MCF 10A (cell line): ENCODE measurements at regions of chr18 and their contacts with region 1.

Region 1: GRCh38 chr18:59823596-59824195 is 76.1 kb upstream of the PMAIP1 start:
- DNase-seq: peak; percentile 83
- H3K4me3 Mint-ChIP-seq: no peak overlapping the region
- H3K27ac Mint-ChIP-seq: no peak overlapping the region
- H3K4me1 Mint-ChIP-seq: peaks cover 4% of the 10 kb centered on the region
- H3K27me3 Mint-ChIP-seq: no peaks in the 10 kb centered on the region
- CTCF ChIP-seq: peak; percentile 87

Region 2: DNA sequence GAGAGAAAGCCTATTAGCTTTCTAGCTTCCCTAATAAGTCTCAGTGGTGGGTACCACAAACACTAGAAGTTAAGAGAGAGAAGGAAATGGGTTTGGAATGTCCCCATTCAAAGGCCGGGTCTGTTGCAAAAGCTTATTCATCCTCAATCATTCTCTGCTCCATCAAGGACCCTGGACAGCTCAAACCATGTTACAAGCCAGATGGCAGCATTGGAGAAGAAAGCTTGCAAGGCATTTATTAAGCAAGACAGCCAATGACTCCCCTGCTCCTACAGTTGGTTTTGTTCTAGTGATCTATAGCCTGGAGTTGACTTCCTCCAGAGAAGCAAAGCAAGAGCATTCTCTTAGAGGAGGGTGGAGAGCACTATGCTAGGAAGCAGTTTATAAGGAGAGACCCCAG is 377.7 kb before region 1 on chr18:
- CTCF ChIA-PET with region 1: interaction called, 12 read pairs
- POLR2A ChIA-PET with region 1: no interaction called
- intact Hi-C with region 1: no loop called
- DNase-seq: peak; percentile 39
- H3K4me3 Mint-ChIP-seq: no peak overlapping the region
- H3K27ac Mint-ChIP-seq: no peak overlapping the region
- H3K4me1 Mint-ChIP-seq: no peaks in the 10 kb centered on the region
- H3K27me3 Mint-ChIP-seq: no peaks in the 10 kb centered on the region
- CTCF ChIP-seq: no peak

Region 3: GRCh38 chr18:59623456-59624368 is 200.0 kb before region 1 on chr18:
- CTCF ChIA-PET with region 1: interaction called, 51 read pairs
- POLR2A ChIA-PET with region 1: no interaction called
- intact Hi-C with region 1: no loop called
- DNase-seq: peak; percentile 86
- H3K4me3 Mint-ChIP-seq: peak overlapping the region; percentile 61
- H3K27ac Mint-ChIP-seq: peak overlapping the region; percentile 67
- H3K4me1 Mint-ChIP-seq: peaks cover 43% of the 10 kb centered on the region
- H3K27me3 Mint-ChIP-seq: peaks cover 4% of the 10 kb centered on the region
- CTCF ChIP-seq: no peak

Region 4: GRCh38 chr18:59685501-59685900 is 138.2 kb before region 1 on chr18:
- CTCF ChIA-PET with region 1: interaction called, 21 read pairs
- POLR2A ChIA-PET with region 1: no interaction called
- intact Hi-C with region 1: no loop called
- DNase-seq: no peak
- H3K4me3 Mint-ChIP-seq: no peak overlapping the region
- H3K27ac Mint-ChIP-seq: no peak overlapping the region
- H3K4me1 Mint-ChIP-seq: peaks cover 3% of the 10 kb centered on the region
- H3K27me3 Mint-ChIP-seq: no peaks in the 10 kb centered on the region
- CTCF ChIP-seq: no peak

Region 5: GRCh38 chr18:59705145-59705544 is 118.6 kb before region 1 on chr18:
- CTCF ChIA-PET with region 1: interaction called, 25 read pairs
- POLR2A ChIA-PET with region 1: interaction called, 5 read pairs
- intact Hi-C with region 1: no loop called
- DNase-seq: no peak
- H3K4me3 Mint-ChIP-seq: no peak overlapping the region
- H3K27ac Mint-ChIP-seq: peak overlapping the region; percentile 75
- H3K4me1 Mint-ChIP-seq: peaks cover 38% of the 10 kb centered on the region
- H3K27me3 Mint-ChIP-seq: no peaks in the 10 kb centered on the region
- CTCF ChIP-seq: no peak

Region 6: DNA sequence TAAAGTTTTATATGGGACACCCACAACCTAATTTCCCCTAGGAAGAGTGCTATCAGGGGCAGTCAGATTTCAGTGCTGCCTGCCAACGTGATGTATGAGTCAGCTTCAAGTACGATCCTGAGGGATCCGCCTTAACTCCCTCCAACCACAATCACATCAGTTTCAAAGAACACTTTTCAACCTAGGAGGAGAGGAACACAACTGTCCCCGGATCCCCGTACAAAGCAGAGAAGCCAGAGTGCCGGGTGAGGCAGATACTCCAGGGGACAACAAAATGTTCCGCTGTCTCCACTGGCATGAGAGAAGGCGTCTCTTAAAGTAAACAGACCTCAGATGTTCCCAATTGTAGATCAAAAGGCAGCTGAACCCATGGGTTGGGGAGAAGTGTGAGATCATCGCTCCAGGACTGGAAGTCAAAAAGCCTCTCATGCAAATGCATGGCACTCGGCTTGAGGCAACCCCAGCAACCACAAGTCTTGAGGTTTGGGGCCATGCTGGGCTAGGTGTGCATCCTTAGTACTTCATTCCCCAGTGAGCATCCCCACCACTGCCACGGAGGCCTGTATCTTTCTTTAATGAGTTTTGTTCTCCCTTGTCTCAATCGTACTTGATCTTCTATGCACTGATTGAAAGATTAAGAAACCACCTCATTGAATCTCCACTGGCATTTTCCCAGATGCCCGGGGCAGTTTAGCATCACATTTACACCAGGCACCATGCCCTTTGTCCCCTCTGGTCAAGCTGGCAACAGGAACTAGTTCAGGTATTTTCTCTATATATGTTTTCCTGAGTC is 35.5 kb before region 1 on chr18:
- CTCF ChIA-PET with region 1: interaction called, 118 read pairs
- POLR2A ChIA-PET with region 1: interaction called, 5 read pairs
- intact Hi-C with region 1: loop called (anchors 1 kb)
- DNase-seq: peak; percentile 74
- H3K4me3 Mint-ChIP-seq: peak overlapping the region; percentile 54
- H3K27ac Mint-ChIP-seq: peak overlapping the region; percentile 76
- H3K4me1 Mint-ChIP-seq: peaks cover 28% of the 10 kb centered on the region
- H3K27me3 Mint-ChIP-seq: no peaks in the 10 kb centered on the region
- CTCF ChIP-seq: no peak